ENCODE measurements at regions of chr4 and their contacts with region 1.

Region 1: DNA sequence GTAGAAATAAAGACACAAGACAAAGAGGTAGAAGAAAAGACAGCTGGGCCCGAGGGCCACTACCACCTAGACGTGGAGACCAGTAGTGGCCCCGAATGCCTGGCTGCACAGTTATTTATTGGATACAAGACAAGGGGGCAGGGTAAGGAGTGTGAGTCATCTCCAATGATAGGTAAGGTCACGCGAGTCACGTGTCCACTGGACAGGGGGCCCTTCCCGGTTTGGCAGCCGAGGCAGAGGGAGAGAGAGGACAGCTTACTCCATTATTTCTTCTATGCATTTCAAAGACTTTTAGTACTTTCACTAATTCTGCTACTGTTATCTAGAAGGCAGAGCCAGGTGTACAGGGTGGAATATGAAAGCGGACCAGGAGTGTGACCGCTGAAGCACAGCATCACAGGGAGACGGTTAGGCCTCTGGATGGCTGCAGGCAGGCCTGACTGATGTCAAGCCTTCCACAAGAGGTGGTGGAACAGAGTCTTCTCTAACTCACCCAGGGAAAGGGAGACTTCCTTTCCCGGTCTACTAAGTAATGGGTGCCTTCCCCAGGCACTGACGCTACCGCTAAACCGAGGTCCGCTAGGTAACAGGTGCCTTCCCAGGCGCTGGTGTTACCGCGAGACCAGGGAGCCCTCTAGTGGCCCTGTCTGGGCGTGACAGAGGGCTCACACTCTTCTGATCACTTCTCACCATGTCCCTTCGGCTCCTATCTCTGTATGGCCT is 44.9 kb downstream of the ZBTB49 start:
- DNase-seq: peak; percentile 67 to 81 (median 76)
- ATAC-seq: peak; percentile 82
- H3K4me3 ChIP-seq: no peak overlapping the region
- H3K4me1 ChIP-seq: no peaks in the 10 kb centered on the region
- CTCF ChIP-seq: peak; percentile 64

Region 2: GRCh38 chr4:4256799-4257198 is 78.2 kb before region 1 on chr4:
- intact Hi-C with region 1: loop called (anchors 5 to 10 kb)
- DNase-seq: no peak
- ATAC-seq: no peak
- H3K4me3 ChIP-seq: no peak overlapping the region
- H3K4me1 ChIP-seq: peaks cover 2% of the 10 kb centered on the region
- CTCF ChIP-seq: no peak

Region 3: DNA sequence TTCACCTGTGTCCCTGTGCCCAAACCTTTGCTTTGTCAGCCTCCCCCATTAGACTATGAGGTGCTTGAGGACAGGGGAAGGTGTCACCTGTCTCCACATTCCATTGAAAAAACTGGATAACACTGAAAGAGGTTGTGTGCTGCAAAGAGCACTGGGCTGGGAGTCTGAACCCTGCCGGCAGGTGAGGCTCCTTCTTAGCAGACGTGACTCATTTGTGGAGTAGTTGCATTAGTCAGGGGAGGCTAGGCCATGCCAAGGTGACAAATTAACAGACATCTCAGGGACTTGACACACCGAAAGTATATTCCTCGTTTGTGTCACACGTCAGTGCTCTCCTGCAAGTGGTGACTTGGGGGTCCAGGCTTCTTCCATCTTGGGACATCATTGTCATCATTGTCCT is 302.8 kb after region 1 on chr4:
- intact Hi-C with region 1: no loop called
- DNase-seq: no peak
- ATAC-seq: no peak
- H3K4me3 ChIP-seq: no peak overlapping the region
- H3K4me1 ChIP-seq: no peaks in the 10 kb centered on the region
- CTCF ChIP-seq: no peak

Region 4: DNA sequence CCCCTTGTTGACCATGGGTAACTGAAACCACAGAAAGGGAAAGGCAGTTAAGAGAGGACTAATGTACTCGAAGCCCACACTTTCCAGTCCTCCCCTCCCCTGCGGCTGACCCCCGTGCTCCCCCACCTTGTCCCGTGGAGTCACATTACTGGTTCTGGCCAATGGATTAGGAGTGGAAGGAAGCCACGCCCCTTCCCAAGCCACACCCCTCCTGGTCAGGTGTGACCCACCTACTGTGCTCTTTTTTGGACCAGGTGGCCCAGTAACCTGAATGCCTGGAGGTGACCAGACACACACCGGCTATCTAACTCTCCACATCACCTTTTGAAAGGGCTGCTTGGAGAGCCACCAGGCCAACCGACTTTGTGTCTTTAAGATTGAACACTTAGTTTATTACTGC is 415.2 kb after region 1 on chr4:
- intact Hi-C with region 1: no loop called
- DNase-seq: no peak
- ATAC-seq: no peak
- H3K4me3 ChIP-seq: no peak overlapping the region
- H3K4me1 ChIP-seq: no peaks in the 10 kb centered on the region
- CTCF ChIP-seq: no peak